Panc1 (cell line): ENCODE measurements at regions of chr3 and their contacts with region 1.

Region 1: DNA sequence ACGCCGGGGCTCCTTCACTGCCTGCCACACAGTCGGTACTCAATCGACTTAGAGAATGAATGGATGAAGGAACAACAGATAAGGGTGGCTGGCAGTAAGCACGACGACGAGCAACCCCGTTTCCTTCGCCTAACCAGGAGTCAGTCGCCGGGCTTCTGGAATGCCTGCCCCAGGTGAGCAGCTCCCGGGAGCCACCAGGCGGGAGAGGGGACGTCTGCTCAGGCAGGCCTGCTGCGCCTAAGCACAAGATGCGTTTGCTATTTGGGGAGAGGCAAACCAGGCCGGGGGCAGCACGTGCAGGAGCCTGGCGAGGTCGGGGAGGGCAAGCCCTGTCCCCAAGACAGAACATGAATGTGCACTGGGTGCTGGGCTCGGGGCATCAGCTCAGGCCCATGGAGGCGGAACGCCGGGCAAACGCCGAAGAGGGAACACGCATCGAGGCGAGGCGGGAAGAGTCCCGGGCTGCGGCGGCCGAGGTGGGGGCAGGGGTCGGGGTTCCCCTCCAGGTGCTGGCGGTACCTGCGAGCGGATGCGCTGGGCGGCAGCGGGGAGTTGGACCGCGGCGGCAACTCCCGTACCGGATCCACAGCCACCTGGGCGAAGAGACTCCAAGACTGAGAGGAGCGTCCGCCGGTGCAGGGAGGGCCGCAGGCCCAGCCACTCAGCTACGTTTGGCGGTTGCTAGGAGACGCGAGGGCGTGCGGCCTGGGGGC is at the start of gene CFAP92:
- DNase-seq: no peak
- ATAC-seq: peak; percentile 97
- H3K4me3 ChIP-seq: peak within 1 kb of the TSS; percentile 37 to 44
- H3K27ac ChIP-seq: no peak within 1 kb of the TSS
- H3K4me1 ChIP-seq: no peaks in the 10 kb centered on the region
- H3K27me3 ChIP-seq: no peaks in the 10 kb centered on the region
- CTCF ChIP-seq: no peak
- total RNA-seq, gene CFAP92: 0.18 TPM

Region 2: GRCh38 chr3:129120254-129121004 is 126.8 kb after region 1 on chr3:
- CTCF ChIA-PET with region 1: no interaction called
- POLR2A ChIA-PET with region 1: interaction called, 3 read pairs
- in situ Hi-C with region 1: loop called (anchors 10 kb)
- intact Hi-C with region 1: no loop called
- DNase-seq: peak; percentile 28
- ATAC-seq: peak; percentile 53
- H3K4me3 ChIP-seq: peak overlapping the region; percentile 76 to 81
- H3K27ac ChIP-seq: peak overlapping the region; percentile 91
- H3K4me1 ChIP-seq: peaks cover 39% of the 10 kb centered on the region
- H3K27me3 ChIP-seq: no peaks in the 10 kb centered on the region
- CTCF ChIP-seq: no peak

Region 3: GRCh38 chr3:129233538-129233937 is 239.9 kb after region 1 on chr3:
- CTCF ChIA-PET with region 1: no interaction called
- POLR2A ChIA-PET with region 1: no interaction called
- in situ Hi-C with region 1: no loop called
- intact Hi-C with region 1: no loop called
- DNase-seq: no peak
- ATAC-seq: no peak
- H3K4me3 ChIP-seq: no peak overlapping the region
- H3K27ac ChIP-seq: peak overlapping the region; percentile 44; the same call in 1 of the 2 replicates
- H3K4me1 ChIP-seq: peaks cover 31% of the 10 kb centered on the region
- H3K27me3 ChIP-seq: no peaks in the 10 kb centered on the region
- CTCF ChIP-seq: no peak